ENCODE measurements at regions of chr10 and their contacts with region 1.

Region 1: GRCh38 chr10:119139464-119140067 is 25.9 kb downstream of the SFXN4 start:
- DNase-seq: peak; percentile 16
- H3K4me3 ChIP-seq: no peak overlapping the region
- H3K27ac ChIP-seq: no peak overlapping the region
- H3K4me1 ChIP-seq: no peaks in the 10 kb centered on the region
- H3K27me3 ChIP-seq: no peaks in the 10 kb centered on the region
- CTCF ChIP-seq: peak; percentile 69 to 72

Region 2: GRCh38 chr10:118373786-118374185 is 765.8 kb before region 1 on chr10:
- CTCF ChIA-PET with region 1: no interaction called
- dilution Hi-C with region 1: no loop called
- in situ Hi-C with region 1: no loop called
- intact Hi-C with region 1: no loop called
- DNase-seq: peak; percentile 57
- H3K4me3 ChIP-seq: no peak overlapping the region
- H3K27ac ChIP-seq: no peak overlapping the region
- H3K4me1 ChIP-seq: peaks cover 11% of the 10 kb centered on the region
- H3K27me3 ChIP-seq: no peaks in the 10 kb centered on the region
- CTCF ChIP-seq: no peak

Region 3: GRCh38 chr10:119416855-119417254 is 277.3 kb after region 1 on chr10:
- CTCF ChIA-PET with region 1: no interaction called
- dilution Hi-C with region 1: no loop called
- in situ Hi-C with region 1: no loop called
- intact Hi-C with region 1: loop called (anchors 1 kb)
- DNase-seq: peak; percentile 41
- H3K4me3 ChIP-seq: no peak overlapping the region
- H3K27ac ChIP-seq: no peak overlapping the region
- H3K4me1 ChIP-seq: no peaks in the 10 kb centered on the region
- H3K27me3 ChIP-seq: no peaks in the 10 kb centered on the region
- CTCF ChIP-seq: peak; percentile 74 to 91

Region 4: DNA sequence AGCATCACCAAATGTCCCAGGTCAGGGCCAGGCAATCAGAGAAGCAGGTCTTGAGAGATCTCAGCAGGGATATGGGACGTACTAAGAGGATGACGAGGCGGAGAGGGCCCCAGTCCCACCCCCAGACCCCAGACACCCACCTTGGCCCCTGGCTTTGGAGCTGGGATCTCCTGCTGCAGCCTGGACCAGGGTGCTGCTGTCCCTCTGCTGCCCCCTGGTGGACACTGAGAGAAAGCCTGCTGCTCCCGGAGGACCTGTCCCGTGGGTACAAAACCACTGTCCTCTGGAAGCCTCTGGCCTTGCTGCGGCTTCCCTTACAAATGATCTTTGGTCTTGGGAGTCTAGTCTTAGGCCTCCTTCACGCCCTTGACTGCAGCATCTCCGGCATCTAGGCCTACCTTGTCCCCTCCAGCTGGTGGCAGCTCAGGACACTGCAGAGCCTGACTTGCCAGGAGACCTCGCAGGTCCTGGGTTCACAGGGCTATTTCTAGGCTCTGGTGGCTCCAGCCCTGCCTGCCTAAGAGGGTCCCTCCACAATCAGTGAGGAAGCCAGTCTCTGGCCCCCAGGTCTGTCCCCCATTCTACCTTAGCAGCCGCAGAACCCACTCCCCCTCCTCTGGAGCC is 305.9 kb after region 1 on chr10:
- CTCF ChIA-PET with region 1: no interaction called
- dilution Hi-C with region 1: no loop called
- in situ Hi-C with region 1: no loop called
- intact Hi-C with region 1: loop called (anchors 1 kb)
- DNase-seq: peak; percentile 50
- H3K4me3 ChIP-seq: no peak overlapping the region
- H3K27ac ChIP-seq: no peak overlapping the region
- H3K4me1 ChIP-seq: peaks cover 17% of the 10 kb centered on the region
- H3K27me3 ChIP-seq: no peaks in the 10 kb centered on the region
- CTCF ChIP-seq: peak; percentile 84 to 94

Measured in mammary epithelial cell (primary cell).